B cell (primary cell): ENCODE measurements at regions of chr17 and their contacts with region 1.

Region 1: GRCh38 chr17:39244600-39245570 is 19.1 kb upstream of the STAC2 start:
- DNase-seq: peak; percentile 87
- ATAC-seq: peak; percentile 80
- H3K4me3 ChIP-seq: no peak overlapping the region
- H3K4me3 Mint-ChIP-seq: peak overlapping the region; percentile 73
- H3K27ac ChIP-seq: no peak overlapping the region
- H3K27ac Mint-ChIP-seq: no peak overlapping the region
- H3K4me1 ChIP-seq: peaks cover 12 to 17% of the 10 kb centered on the region in 2 donors
- H3K4me1 Mint-ChIP-seq: peaks cover 17% of the 10 kb centered on the region
- H3K27me3 ChIP-seq: peaks cover 0 to 4% (median 0%) of the 10 kb centered on the region in 4 experiments
- H3K27me3 Mint-ChIP-seq: peaks cover 2% of the 10 kb centered on the region
- CTCF ChIP-seq: peak; percentile 97

Region 2: DNA sequence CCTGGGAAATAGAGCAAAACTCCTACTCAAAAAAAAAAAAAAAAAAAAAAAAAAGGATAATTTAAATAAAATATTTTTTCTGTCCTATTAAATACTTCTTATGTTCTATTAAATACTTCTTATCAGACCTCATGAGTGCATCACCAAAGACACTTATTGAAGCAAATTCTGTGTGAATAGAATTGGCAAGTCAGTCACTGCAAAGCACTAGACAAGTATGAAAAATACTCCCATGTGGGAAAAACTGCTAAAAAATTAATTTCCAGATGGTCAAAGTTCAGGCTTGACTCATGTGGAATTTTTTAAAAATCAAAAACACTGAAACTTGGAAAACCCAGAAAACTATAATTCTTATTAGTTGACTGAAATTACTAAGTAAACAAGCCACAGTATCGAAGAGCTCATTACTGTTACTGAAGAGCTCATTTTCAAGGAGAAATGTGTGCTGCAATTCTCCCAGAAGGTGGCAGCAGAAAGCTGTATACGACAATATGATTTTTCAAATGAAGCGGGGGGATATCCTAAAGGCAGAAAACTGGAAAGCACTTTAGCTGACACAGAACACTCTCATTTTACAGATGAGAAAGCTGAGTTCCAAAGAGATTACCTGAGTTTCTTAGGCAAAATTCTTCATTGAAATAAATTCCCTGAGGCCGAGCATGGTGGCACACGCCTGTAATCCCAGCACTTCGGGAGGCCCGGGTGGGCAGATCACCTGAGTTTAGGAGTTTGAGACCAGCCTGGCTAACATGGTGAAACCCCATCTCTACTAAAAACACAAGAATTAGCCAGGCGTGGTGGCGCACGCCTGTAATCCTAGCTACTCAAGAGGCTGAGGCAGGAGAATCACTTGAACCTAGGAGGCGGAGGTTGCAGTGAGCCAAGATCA is 261.8 kb before region 1 on chr17:
- CTCF ChIA-PET with region 1: interaction called, 138 read pairs
- POLR2A ChIA-PET with region 1: no interaction called
- intact Hi-C with region 1: loop called (anchors 1 kb)
- DNase-seq: peak; percentile 76
- ATAC-seq: peak; percentile 24
- H3K4me3 ChIP-seq: no peak overlapping the region
- H3K4me3 Mint-ChIP-seq: no peak overlapping the region
- H3K27ac ChIP-seq: no peak overlapping the region
- H3K27ac Mint-ChIP-seq: no peak overlapping the region
- H3K4me1 ChIP-seq: no peaks in the 10 kb centered on the region
- H3K4me1 Mint-ChIP-seq: peaks cover 2% of the 10 kb centered on the region
- H3K27me3 ChIP-seq: peaks cover 0 to 3% (median 0%) of the 10 kb centered on the region in 4 experiments
- H3K27me3 Mint-ChIP-seq: peaks cover 16% of the 10 kb centered on the region
- CTCF ChIP-seq: peak; percentile 82

Region 3: DNA sequence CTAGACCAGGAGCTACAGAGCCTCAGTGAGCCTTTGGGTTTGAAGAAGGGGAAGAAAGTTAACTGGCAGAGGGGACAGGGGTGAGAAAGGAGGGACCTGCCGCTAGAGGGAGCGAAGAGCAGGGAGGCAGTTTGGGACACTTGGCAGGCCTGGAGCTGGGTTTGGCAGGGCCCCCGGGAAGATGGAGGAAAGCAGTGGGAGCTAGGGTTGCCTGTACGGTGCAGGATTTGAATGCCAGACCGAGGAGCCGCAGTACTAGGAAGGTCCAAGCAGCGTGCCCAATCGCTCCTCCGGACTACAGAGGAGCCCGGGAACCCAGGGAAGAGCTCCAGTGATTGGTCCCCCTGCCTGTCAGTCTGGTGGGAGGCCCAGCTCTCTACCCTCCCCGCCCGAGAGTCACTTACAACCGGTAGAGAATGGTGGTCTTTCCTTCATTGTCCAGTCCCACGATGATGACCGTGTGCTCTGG is 80.2 kb before region 1 on chr17:
- CTCF ChIA-PET with region 1: interaction called, 50 read pairs
- POLR2A ChIA-PET with region 1: no interaction called
- intact Hi-C with region 1: loop called (anchors 1 kb)
- DNase-seq: peak; percentile 86
- ATAC-seq: peak; percentile 89
- H3K4me3 ChIP-seq: peak overlapping the region; percentile 36 to 74 (median 69)
- H3K4me3 Mint-ChIP-seq: peak overlapping the region; percentile 90
- H3K27ac ChIP-seq: no peak overlapping the region
- H3K27ac Mint-ChIP-seq: peak overlapping the region; percentile 29
- H3K4me1 ChIP-seq: peaks cover 27 to 29% of the 10 kb centered on the region in 2 donors
- H3K4me1 Mint-ChIP-seq: peaks cover 28% of the 10 kb centered on the region
- H3K27me3 ChIP-seq: peaks cover 0 to 38% (median 10%) of the 10 kb centered on the region in 4 experiments
- H3K27me3 Mint-ChIP-seq: peaks cover 14% of the 10 kb centered on the region
- CTCF ChIP-seq: peak; percentile 85

Region 4: DNA sequence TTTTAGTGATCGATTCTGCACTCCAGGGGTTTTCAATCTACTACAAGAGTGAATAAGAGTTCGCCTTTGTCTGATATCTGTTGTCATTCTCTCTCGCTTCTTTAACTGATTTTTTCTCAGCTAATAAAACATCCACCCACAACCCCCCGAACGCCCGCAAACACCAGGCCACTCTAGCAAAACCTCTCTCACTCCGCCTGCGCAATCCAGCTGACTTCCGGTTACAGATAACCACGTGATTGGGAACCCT is 45.1 kb before region 1 on chr17:
- CTCF ChIA-PET with region 1: interaction called, 707 read pairs
- POLR2A ChIA-PET with region 1: interaction called, 19 read pairs
- intact Hi-C with region 1: no loop called
- DNase-seq: no peak
- ATAC-seq: peak; percentile 62
- H3K4me3 ChIP-seq: peak overlapping the region; percentile 78 to 100 (median 95)
- H3K4me3 Mint-ChIP-seq: peak overlapping the region; percentile 89
- H3K27ac ChIP-seq: peak overlapping the region; percentile 89 to 99
- H3K27ac Mint-ChIP-seq: peak overlapping the region; percentile 100
- H3K4me1 ChIP-seq: peaks cover 37 to 61% of the 10 kb centered on the region in 2 donors
- H3K4me1 Mint-ChIP-seq: peaks cover 57% of the 10 kb centered on the region
- H3K27me3 ChIP-seq: no peaks in the 10 kb centered on the region
- H3K27me3 Mint-ChIP-seq: no peaks in the 10 kb centered on the region
- CTCF ChIP-seq: no peak

Region 5: GRCh38 chr17:39261286-39261685 is 16.4 kb after region 1 on chr17:
- CTCF ChIA-PET with region 1: interaction called, 15 read pairs
- POLR2A ChIA-PET with region 1: no interaction called
- intact Hi-C with region 1: no loop called
- DNase-seq: peak; percentile 34
- ATAC-seq: no peak
- H3K4me3 ChIP-seq: no peak overlapping the region
- H3K4me3 Mint-ChIP-seq: no peak overlapping the region
- H3K27ac ChIP-seq: no peak overlapping the region
- H3K27ac Mint-ChIP-seq: no peak overlapping the region
- H3K4me1 ChIP-seq: no peaks in the 10 kb centered on the region
- H3K4me1 Mint-ChIP-seq: no peaks in the 10 kb centered on the region
- H3K27me3 ChIP-seq: no peaks in the 10 kb centered on the region
- H3K27me3 Mint-ChIP-seq: no peaks in the 10 kb centered on the region
- CTCF ChIP-seq: peak; percentile 35

Region 6: GRCh38 chr17:39304188-39304587 is 59.3 kb after region 1 on chr17:
- CTCF ChIA-PET with region 1: no interaction called
- POLR2A ChIA-PET with region 1: no interaction called
- intact Hi-C with region 1: no loop called
- DNase-seq: no peak
- ATAC-seq: no peak
- H3K4me3 ChIP-seq: no peak overlapping the region
- H3K4me3 Mint-ChIP-seq: no peak overlapping the region
- H3K27ac ChIP-seq: no peak overlapping the region
- H3K27ac Mint-ChIP-seq: no peak overlapping the region
- H3K4me1 ChIP-seq: peaks cover 18 to 22% of the 10 kb centered on the region in 2 donors
- H3K4me1 Mint-ChIP-seq: peaks cover 26% of the 10 kb centered on the region
- H3K27me3 ChIP-seq: no peaks in the 10 kb centered on the region
- H3K27me3 Mint-ChIP-seq: no peaks in the 10 kb centered on the region
- CTCF ChIP-seq: no peak